ENCODE measurements at regions of chr6 and their contacts with region 1.

Region 1: GRCh38 chr6:134882426-134883038 is 67.4 kb downstream of the ALDH8A1 start:
- DNase-seq: peak in 2 of 3 donors; percentile 80 to 83
- ATAC-seq: peak; percentile 81
- H3K4me3 ChIP-seq: no peak overlapping the region
- H3K4me1 ChIP-seq: peaks cover 4% of the 10 kb centered on the region
- CTCF ChIP-seq: peak; percentile 89

Region 2: GRCh38 chr6:134161036-134161435 is 721.5 kb before region 1 on chr6:
- intact Hi-C with region 1: loop called in 1 of 2 experiments (anchors 5 kb)
- DNase-seq: no peak
- ATAC-seq: peak; percentile 73
- H3K4me3 ChIP-seq: no peak overlapping the region
- H3K4me1 ChIP-seq: peaks cover 3% of the 10 kb centered on the region
- CTCF ChIP-seq: no peak